ENCODE measurements at regions of chr9 and their contacts with region 1.

Region 1: GRCh38 chr9:136671646-136672430 is 9.1 kb downstream of the EGFL7 start:
- DNase-seq: peak; percentile 18
- ATAC-seq: peak; percentile 35
- H3K4me3 ChIP-seq: no peak overlapping the region
- H3K27ac ChIP-seq: no peak overlapping the region
- H3K4me1 ChIP-seq: no peaks in the 10 kb centered on the region
- H3K27me3 ChIP-seq: no peaks in the 10 kb centered on the region
- CTCF ChIP-seq: peak; percentile 77

Region 2: GRCh38 chr9:136694236-136694942 is 22.6 kb after region 1 on chr9:
- CTCF ChIA-PET with region 1: interaction called, 6 read pairs
- POLR2A ChIA-PET with region 1: no interaction called
- intact Hi-C with region 1: loop called (anchors 2 kb)
- DNase-seq: peak; percentile 63
- ATAC-seq: peak; percentile 72
- H3K4me3 ChIP-seq: peak overlapping the region; percentile 58
- H3K27ac ChIP-seq: peak overlapping the region; percentile 98
- H3K4me1 ChIP-seq: peaks cover 35% of the 10 kb centered on the region
- H3K27me3 ChIP-seq: no peaks in the 10 kb centered on the region
- CTCF ChIP-seq: peak; percentile 66

Region 3: GRCh38 chr9:136790927-136791641 is 119.2 kb after region 1 on chr9 and contains the start of gene TMEM141:
- CTCF ChIA-PET with region 1: no interaction called
- POLR2A ChIA-PET with region 1: no interaction called
- intact Hi-C with region 1: no loop called
- DNase-seq: peak; percentile 95
- ATAC-seq: peak; percentile 88
- H3K4me3 ChIP-seq: peak within 1 kb of the TSS; percentile 68
- H3K27ac ChIP-seq: peak within 1 kb of the TSS; percentile 79
- H3K4me1 ChIP-seq: peaks cover 22% of the 10 kb centered on the region
- H3K27me3 ChIP-seq: no peaks in the 10 kb centered on the region
- CTCF ChIP-seq: no peak
- total RNA-seq, gene TMEM141: 94.6 and 101 TPM in 2 replicates

Region 4: DNA sequence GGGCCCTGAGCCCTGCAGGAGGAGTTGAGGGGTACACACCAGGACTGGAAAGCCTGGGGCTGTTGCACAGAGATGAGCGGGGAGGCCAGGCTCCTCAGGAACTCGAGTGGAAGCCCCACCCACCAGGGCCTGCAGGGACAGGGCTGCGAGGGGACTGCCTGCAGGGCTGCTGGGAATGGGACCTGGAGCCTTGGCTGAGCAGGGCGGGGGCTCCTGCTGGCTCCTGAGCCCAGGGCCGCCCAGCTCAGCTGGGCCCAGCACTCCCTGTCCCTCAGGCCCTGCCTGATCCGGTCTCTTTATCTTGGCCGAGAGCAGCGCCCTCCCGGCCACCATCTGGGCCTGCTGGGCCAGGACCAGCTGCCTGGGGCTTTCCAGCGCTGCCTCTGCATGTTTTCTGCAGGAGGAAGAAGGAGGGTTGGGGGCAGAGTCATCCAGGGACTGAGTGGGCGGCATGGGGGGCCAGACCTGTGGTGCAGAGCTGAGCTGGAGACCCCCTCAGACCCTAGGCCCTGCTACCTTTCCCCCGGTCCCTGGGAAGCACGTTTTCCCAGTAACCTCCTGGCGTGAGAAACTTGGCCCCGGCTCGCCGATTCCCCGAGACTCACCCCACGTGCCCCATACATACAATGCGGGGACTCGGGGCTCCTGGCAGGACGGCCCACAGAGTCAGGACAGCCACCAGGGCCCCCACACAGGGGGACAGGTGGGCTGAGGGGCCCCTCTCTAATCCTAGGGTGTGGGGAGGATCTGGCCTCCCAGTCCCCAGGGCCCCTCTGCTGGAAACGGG is 289.6 kb after region 1 on chr9:
- CTCF ChIA-PET with region 1: no interaction called
- POLR2A ChIA-PET with region 1: no interaction called
- intact Hi-C with region 1: no loop called
- DNase-seq: no peak
- ATAC-seq: no peak
- H3K4me3 ChIP-seq: no peak overlapping the region
- H3K27ac ChIP-seq: no peak overlapping the region
- H3K4me1 ChIP-seq: peaks cover 8% of the 10 kb centered on the region
- H3K27me3 ChIP-seq: no peaks in the 10 kb centered on the region
- CTCF ChIP-seq: no peak